Right cardiac atrium (tissue), 5 donors: ENCODE measurements at regions of chr2 and their contacts with region 1.

Region 1: GRCh38 chr2:99818842-99819241 is 323.5 kb downstream of the AFF3 start:
- DNase-seq: no peak
- ATAC-seq: no peak
- H3K4me3 ChIP-seq: no peak overlapping the region
- H3K27ac ChIP-seq: no peak overlapping the region
- H3K4me1 ChIP-seq: no peaks in the 10 kb centered on the region
- H3K27me3 ChIP-seq: no peaks in the 10 kb centered on the region

Region 2: GRCh38 chr2:99572373-99573164 is 246.3 kb before region 1 on chr2:
- intact Hi-C with region 1: loop called in 2 of 4 experiments (anchors 10 kb)
- DNase-seq: peak in 1 of 3 donors; percentile 51
- ATAC-seq: peak; percentile 47 to 77
- H3K4me3 ChIP-seq: no peak overlapping the region
- H3K27ac ChIP-seq: no peak overlapping the region
- H3K4me1 ChIP-seq: no peaks in the 10 kb centered on the region
- H3K27me3 ChIP-seq: no peaks in the 10 kb centered on the region